Heart left ventricle (tissue), 16 donors: ENCODE measurements at regions of chr11 and their contacts with region 1.

Region 1: GRCh38 chr11:66408488-66409214 is 12.2 kb upstream of the NPAS4 start:
- DNase-seq: peak; percentile 85 to 92 (median 88)
- ATAC-seq: peak; percentile 34 to 97 (median 91)
- H3K4me3 ChIP-seq: peak overlapping the region in 11 of 12 donors; percentile 10 to 63 (median 51)
- H3K27ac ChIP-seq: peak overlapping the region in 5 of 12 donors; percentile 13 to 82 (median 46)
- H3K4me1 ChIP-seq: peaks cover 0 to 11% (median 7%) of the 10 kb centered on the region in 12 donors
- H3K27me3 ChIP-seq: peaks cover 0 to 18% (median 0%) of the 10 kb centered on the region in 9 donors
- CTCF ChIP-seq: peak in 11 of 12 donors; percentile 100
- POLR2A ChIP-seq: no peak

Region 2: GRCh38 chr11:66035653-66036333 is 372.9 kb before region 1 on chr11:
- intact Hi-C with region 1: no loop called
- DNase-seq: no peak
- ATAC-seq: peak in 3 of 4 donors; percentile 44 to 73 (median 50)
- H3K4me3 ChIP-seq: no peak overlapping the region
- H3K27ac ChIP-seq: no peak overlapping the region
- H3K4me1 ChIP-seq: peaks cover 0 to 6% (median 0%) of the 10 kb centered on the region in 12 donors
- H3K27me3 ChIP-seq: peaks cover 0 to 3% (median 0%) of the 10 kb centered on the region in 9 donors
- CTCF ChIP-seq: no peak
- POLR2A ChIP-seq: no peak

Region 3: GRCh38 chr11:66429983-66430602 is 21.4 kb after region 1 on chr11:
- intact Hi-C with region 1: loop called in 7 of 10 experiments (anchors 1 to 2 kb)
- DNase-seq: peak; percentile 58 to 81 (median 71)
- ATAC-seq: peak in 3 of 4 donors; percentile 78
- H3K4me3 ChIP-seq: no peak overlapping the region
- H3K27ac ChIP-seq: no peak overlapping the region
- H3K4me1 ChIP-seq: no peaks in the 10 kb centered on the region
- H3K27me3 ChIP-seq: no peaks in the 10 kb centered on the region
- CTCF ChIP-seq: peak; percentile 62 to 83 (median 70)
- POLR2A ChIP-seq: no peak

Region 4: GRCh38 chr11:66438504-66439466 is 30.1 kb after region 1 on chr11 and contains the start of gene MRPL11:
- intact Hi-C with region 1: loop called in 1 of 10 experiments (anchors 2 kb)
- DNase-seq: peak; percentile 86 to 93 (median 89)
- ATAC-seq: peak; percentile 99 to 100 (median 100)
- H3K4me3 ChIP-seq: peak within 1 kb of the TSS; percentile 63 to 98 (median 83)
- H3K27ac ChIP-seq: peak within 1 kb of the TSS; percentile 82 to 95 (median 90)
- H3K4me1 ChIP-seq: peaks cover 0 to 11% (median 8%) of the 10 kb centered on the region in 12 donors
- H3K27me3 ChIP-seq: no peaks in the 10 kb centered on the region
- CTCF ChIP-seq: peak; percentile 31 to 88 (median 68)
- POLR2A ChIP-seq: peak in 1 of 2 donors; percentile 14
- total RNA-seq, gene MRPL11: 38.9 to 56.9 (median 47.4) TPM

Region 5: GRCh38 chr11:66459138-66459778 is 50.6 kb after region 1 on chr11:
- intact Hi-C with region 1: no loop called
- DNase-seq: no peak
- ATAC-seq: no peak
- H3K4me3 ChIP-seq: no peak overlapping the region
- H3K27ac ChIP-seq: no peak overlapping the region
- H3K4me1 ChIP-seq: peaks cover 0 to 4% (median 0%) of the 10 kb centered on the region in 12 donors
- H3K27me3 ChIP-seq: no peaks in the 10 kb centered on the region
- CTCF ChIP-seq: no peak
- POLR2A ChIP-seq: no peak

Region 6: DNA sequence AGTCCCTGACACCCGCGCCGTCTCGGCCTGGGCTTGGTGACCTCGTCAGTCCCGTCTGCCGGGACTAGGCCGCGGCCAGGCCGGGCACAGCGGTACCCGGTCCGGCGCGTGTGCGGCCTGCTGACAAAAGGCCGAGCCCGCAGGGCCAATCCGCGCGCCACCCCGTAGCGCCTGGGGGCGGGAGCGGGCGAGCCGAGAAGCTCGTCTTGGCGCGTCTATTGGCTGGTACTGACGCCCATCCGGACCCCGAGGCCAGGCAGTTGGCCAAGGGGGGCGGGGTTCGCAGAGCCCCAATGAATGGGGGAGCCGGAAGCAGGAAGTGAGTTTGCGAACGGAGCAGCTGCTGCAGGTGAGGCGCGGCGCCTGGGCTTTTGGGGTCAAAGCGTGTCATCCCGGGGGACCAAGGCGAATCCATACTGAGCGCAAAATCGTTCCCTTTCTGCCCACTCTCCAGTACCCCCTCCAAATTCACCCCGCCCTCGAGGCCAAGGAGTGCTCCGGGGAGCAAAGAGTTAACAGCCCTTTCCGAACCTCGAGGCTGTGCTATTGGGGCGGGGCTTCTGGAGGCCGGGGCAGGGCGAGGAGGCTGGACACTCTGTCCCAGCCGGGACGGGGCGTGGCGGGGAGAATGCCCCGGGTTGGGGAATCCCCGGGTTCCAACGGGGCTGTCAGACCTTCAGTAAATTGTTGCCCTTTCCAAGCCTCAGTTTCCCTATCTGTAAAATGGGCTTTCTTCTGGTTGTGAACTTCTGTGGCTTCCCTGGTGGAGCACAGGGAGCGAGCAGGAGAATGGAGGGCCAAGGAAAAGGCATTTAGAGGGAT is 71.7 kb after region 1 on chr11 and contains the start of gene DPP3:
- intact Hi-C with region 1: loop called in 1 of 10 experiments (anchors 2 kb)
- DNase-seq: peak; percentile 98 to 99 (median 98)
- ATAC-seq: peak; percentile 96 to 98 (median 96)
- H3K4me3 ChIP-seq: peak within 1 kb of the TSS; percentile 58 to 93 (median 76)
- H3K27ac ChIP-seq: peak within 1 kb of the TSS; percentile 64 to 94 (median 88)
- H3K4me1 ChIP-seq: peaks cover 0 to 19% (median 10%) of the 10 kb centered on the region in 12 donors
- H3K27me3 ChIP-seq: no peaks in the 10 kb centered on the region
- CTCF ChIP-seq: peak in 1 of 12 donors; percentile 3
- POLR2A ChIP-seq: peak in 1 of 2 donors; percentile 91
- total RNA-seq, gene DPP3: 6.2 to 43.1 (median 14.9) TPM

Region 7: DNA sequence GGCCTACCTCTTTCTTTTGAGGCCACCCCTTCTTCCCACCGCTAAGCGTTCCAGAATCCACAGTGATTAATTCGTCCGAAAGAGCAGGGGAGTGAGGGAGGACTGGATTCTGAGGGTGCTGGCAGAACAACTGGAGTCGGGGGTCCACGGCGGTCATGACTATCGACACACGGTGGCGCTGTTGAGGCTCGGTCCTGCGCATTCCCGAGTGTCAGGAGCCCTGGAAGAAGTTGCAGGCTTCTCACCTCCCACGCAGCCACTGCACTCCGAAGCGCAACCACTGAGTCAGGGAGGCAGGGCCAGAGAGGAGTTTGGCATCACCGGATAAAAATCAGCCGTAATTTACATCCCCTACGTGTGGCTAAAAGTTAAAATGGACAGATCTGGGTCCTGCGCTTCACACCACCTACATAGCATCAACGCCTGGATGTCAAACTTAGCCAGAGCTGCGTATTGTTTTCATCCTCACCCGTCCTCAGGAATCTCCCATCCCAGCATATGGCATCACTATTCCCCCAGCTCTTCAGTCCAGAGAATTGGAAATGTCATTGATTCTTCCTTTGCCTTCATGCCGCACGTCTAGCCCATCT is 170.5 kb after region 1 on chr11:
- intact Hi-C with region 1: loop called in 1 of 10 experiments (anchors 5 kb)
- DNase-seq: peak; percentile 79 to 90 (median 82)
- ATAC-seq: peak; percentile 78 to 97 (median 88)
- H3K4me3 ChIP-seq: no peak overlapping the region
- H3K27ac ChIP-seq: no peak overlapping the region
- H3K4me1 ChIP-seq: peaks cover 0 to 8% (median 0%) of the 10 kb centered on the region in 12 donors
- H3K27me3 ChIP-seq: no peaks in the 10 kb centered on the region
- CTCF ChIP-seq: peak; percentile 72 to 87 (median 82)
- POLR2A ChIP-seq: no peak

Region 8: GRCh38 chr11:66686801-66687750 is 278.4 kb after region 1 on chr11:
- intact Hi-C with region 1: loop called in 1 of 10 experiments (anchors 5 kb)
- DNase-seq: no peak
- ATAC-seq: no peak
- H3K4me3 ChIP-seq: no peak overlapping the region
- H3K27ac ChIP-seq: no peak overlapping the region
- H3K4me1 ChIP-seq: no peaks in the 10 kb centered on the region
- H3K27me3 ChIP-seq: no peaks in the 10 kb centered on the region
- CTCF ChIP-seq: no peak
- POLR2A ChIP-seq: no peak

Region 9: GRCh38 chr11:66835768-66836405 is 427.2 kb after region 1 on chr11:
- intact Hi-C with region 1: loop called in 8 of 10 experiments (anchors 2 to 10 kb)
- DNase-seq: no peak
- ATAC-seq: no peak
- H3K4me3 ChIP-seq: no peak overlapping the region
- H3K27ac ChIP-seq: no peak overlapping the region
- H3K4me1 ChIP-seq: peaks cover 0 to 7% (median 0%) of the 10 kb centered on the region in 12 donors
- H3K27me3 ChIP-seq: no peaks in the 10 kb centered on the region
- CTCF ChIP-seq: no peak
- POLR2A ChIP-seq: no peak